ENCODE measurements at regions of chr17 and their contacts with region 1.

Region 1: GRCh38 chr17:42112552-42113176 is at the start of gene DHX58:
- DNase-seq: peak; percentile 80
- H3K4me3 ChIP-seq: peak within 1 kb of the TSS; percentile 43 to 62 (median 49)
- H3K27ac ChIP-seq: peak within 1 kb of the TSS; percentile 41
- H3K4me1 ChIP-seq: peaks cover 16% of the 10 kb centered on the region
- H3K27me3 ChIP-seq: no peaks in the 10 kb centered on the region
- CTCF ChIP-seq: no peak
- total RNA-seq, gene DHX58: 11.7 to 12.2 TPM

Region 2: DNA sequence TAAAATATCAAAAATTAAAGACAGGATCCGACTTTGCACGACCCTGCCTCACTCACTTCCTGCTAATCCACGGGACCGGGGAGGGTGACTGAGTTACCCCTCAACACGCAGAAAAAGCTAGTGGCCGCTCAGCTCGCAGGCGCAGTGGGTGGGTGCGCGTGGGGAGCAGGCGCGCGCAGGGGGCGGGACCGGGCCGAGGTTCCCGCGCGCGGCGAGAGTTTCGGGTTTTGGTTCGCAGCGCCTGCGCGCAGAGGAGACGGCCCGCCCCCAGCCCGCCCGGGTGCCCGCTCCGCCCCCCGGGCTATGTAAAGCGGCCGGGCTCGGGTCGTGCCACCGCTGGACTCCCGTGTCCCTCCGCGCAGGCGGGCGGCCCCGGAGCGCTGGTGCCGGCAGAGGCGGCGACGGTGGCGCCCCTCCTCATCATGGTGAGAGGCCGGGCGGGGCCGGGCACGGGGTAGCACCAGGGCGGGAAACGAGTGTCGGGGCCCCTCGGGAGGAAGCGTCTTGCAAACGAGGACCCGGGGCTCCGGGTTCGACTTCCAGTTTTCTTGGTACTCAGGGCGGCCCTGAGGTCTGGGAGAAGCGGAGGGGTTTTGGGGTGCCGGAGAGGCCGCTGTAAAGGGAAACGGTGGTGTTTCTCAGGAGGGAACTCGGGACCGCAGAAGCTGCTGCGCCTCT is 146.1 kb before region 1 on chr17 and contains the start of gene CNP:
- CTCF ChIA-PET with region 1: no interaction called
- dilution Hi-C with region 1: loop called (anchors 10 kb)
- in situ Hi-C with region 1: loop called (anchors 5 to 10 kb)
- intact Hi-C with region 1: loop called (anchors 1 kb)
- DNase-seq: peak; percentile 92
- H3K4me3 ChIP-seq: peak within 1 kb of the TSS; percentile 77 to 93 (median 80)
- H3K27ac ChIP-seq: peak within 1 kb of the TSS; percentile 82
- H3K4me1 ChIP-seq: peaks cover 25% of the 10 kb centered on the region
- H3K27me3 ChIP-seq: no peaks in the 10 kb centered on the region
- CTCF ChIP-seq: no peak
- total RNA-seq, gene CNP: 61.7 to 72.6 TPM

Region 3: DNA sequence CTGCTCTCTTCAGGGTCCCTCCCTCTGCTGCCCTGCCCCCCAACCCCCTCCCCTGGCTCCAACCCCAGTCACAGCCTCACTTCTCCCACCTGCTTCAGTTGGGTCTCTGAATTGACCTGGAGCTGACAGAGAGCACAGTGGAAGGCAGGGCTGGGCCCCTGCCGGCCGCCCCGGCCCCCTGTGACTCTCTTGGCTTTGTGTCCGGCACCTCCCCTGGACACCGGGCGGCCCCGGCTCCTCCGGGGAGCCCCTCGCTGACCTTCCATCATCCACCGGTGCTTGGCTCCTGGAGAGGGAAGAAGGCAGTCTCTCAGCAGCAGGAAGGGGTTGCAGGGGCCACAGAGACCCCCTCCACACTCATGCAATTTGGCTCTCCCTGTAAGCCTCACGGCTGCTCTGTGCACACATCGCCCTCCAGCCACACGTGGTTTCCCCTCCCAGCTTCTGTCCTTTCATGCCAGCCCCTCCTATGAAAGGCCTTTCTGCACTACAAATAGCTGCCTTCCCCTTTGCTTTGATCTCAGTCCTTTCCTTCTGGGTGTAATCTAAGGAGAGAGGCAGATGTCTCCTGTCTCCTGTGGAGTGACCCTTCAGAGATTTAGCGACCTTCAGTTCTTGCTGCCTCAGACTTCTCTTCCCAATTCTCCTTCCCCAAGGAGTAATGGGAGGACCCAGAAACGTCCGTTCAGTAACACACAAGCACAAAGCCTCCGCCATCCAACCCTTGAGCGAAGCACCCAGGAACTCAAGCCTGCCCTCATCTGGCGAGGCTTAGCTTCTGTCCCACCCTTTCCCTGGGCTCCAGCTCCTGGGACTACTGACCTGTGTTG is 84.5 kb before region 1 on chr17:
- CTCF ChIA-PET with region 1: no interaction called
- dilution Hi-C with region 1: loop called (anchors 10 kb)
- in situ Hi-C with region 1: loop called (anchors 5 to 10 kb)
- intact Hi-C with region 1: loop called (anchors 1 kb)
- DNase-seq: no peak
- H3K4me3 ChIP-seq: no peak overlapping the region
- H3K27ac ChIP-seq: no peak overlapping the region
- H3K4me1 ChIP-seq: peaks cover 12% of the 10 kb centered on the region
- H3K27me3 ChIP-seq: no peaks in the 10 kb centered on the region
- CTCF ChIP-seq: no peak

Region 4: GRCh38 chr17:42067351-42068091 is 45.1 kb before region 1 on chr17:
- CTCF ChIA-PET with region 1: no interaction called
- dilution Hi-C with region 1: no loop called
- in situ Hi-C with region 1: no loop called
- intact Hi-C with region 1: loop called (anchors 1 kb)
- DNase-seq: no peak
- H3K4me3 ChIP-seq: no peak overlapping the region
- H3K27ac ChIP-seq: no peak overlapping the region
- H3K4me1 ChIP-seq: peaks cover 4% of the 10 kb centered on the region
- H3K27me3 ChIP-seq: peaks cover 7% of the 10 kb centered on the region
- CTCF ChIP-seq: peak; percentile 88 to 93

Region 5: GRCh38 chr17:42405963-42406495 is 293.4 kb after region 1 on chr17:
- CTCF ChIA-PET with region 1: no interaction called
- dilution Hi-C with region 1: no loop called
- in situ Hi-C with region 1: no loop called
- intact Hi-C with region 1: loop called (anchors 10 kb)
- DNase-seq: peak; percentile 26
- H3K4me3 ChIP-seq: no peak overlapping the region
- H3K27ac ChIP-seq: no peak overlapping the region
- H3K4me1 ChIP-seq: peaks cover 50% of the 10 kb centered on the region
- H3K27me3 ChIP-seq: no peaks in the 10 kb centered on the region
- CTCF ChIP-seq: peak; percentile 45 to 76